ENCODE measurements at regions of chr6 and their contacts with region 1.

Region 1: DNA sequence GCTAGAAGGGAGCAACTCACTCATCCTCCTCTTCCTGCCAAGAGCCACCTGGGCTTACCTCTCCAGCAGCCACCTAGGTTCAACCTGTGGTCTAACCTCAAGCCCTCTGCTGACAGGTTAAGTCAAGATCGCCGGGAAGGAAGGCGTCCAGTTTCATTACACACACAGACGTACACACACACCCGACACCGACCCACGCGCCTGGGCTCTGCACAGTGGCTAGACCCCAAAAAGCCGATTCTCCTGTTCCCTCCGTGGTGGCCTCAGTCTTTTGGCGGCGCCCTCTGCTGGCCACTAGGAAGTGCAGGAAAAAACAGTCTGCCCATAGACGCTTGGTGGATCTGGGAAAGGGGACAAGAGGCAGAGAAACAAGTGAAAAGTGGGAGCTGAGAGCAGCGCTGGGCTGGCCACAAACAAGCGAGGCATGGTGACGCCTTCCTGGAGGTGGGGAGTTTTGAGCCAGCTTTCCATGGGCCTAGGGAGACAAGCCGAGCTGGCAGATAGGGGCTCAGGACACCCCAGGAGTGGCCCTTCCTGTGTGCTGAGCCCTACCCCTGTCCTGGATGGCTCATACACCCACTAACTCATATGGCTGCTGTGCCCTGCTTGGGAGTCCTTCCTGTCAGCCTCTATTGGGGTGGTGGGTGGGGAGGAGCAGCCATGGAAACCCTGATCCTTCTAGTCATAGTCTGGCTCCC is 52.7 kb downstream of the MRPL14 start:
- DNase-seq: peak; percentile 87
- ATAC-seq: peak; percentile 39
- H3K4me3 ChIP-seq: no peak overlapping the region
- H3K27ac ChIP-seq: peak overlapping the region; percentile 87
- H3K4me1 ChIP-seq: peaks cover 32% of the 10 kb centered on the region
- H3K27me3 ChIP-seq: no peaks in the 10 kb centered on the region
- CTCF ChIP-seq: peak; percentile 94
- POLR2A ChIP-seq: peak; percentile 48
- RAD21 ChIP-seq: peak; percentile 92

Region 2: GRCh38 chr6:43608310-43608763 is 466.3 kb before region 1 on chr6:
- CTCF ChIA-PET with region 1: interaction called, 8 read pairs
- POLR2A ChIA-PET with region 1: no interaction called
- dilution Hi-C with region 1: no loop called
- in situ Hi-C with region 1: loop called (anchors 10 kb)
- intact Hi-C with region 1: loop called (anchors 1 kb)
- DNase-seq: peak; percentile 86
- ATAC-seq: peak; percentile 81
- H3K4me3 ChIP-seq: no peak overlapping the region
- H3K27ac ChIP-seq: no peak overlapping the region
- H3K4me1 ChIP-seq: no peaks in the 10 kb centered on the region
- H3K27me3 ChIP-seq: no peaks in the 10 kb centered on the region
- CTCF ChIP-seq: peak; percentile 72
- POLR2A ChIP-seq: no peak
- RAD21 ChIP-seq: peak; percentile 68

Region 3: GRCh38 chr6:43723737-43724295 is 350.8 kb before region 1 on chr6:
- CTCF ChIA-PET with region 1: no interaction called
- POLR2A ChIA-PET with region 1: no interaction called
- dilution Hi-C with region 1: no loop called
- in situ Hi-C with region 1: no loop called
- intact Hi-C with region 1: loop called (anchors 1 kb)
- DNase-seq: peak; percentile 70
- ATAC-seq: peak; percentile 77
- H3K4me3 ChIP-seq: no peak overlapping the region
- H3K27ac ChIP-seq: no peak overlapping the region
- H3K4me1 ChIP-seq: peaks cover 20% of the 10 kb centered on the region
- H3K27me3 ChIP-seq: peaks cover 12% of the 10 kb centered on the region
- CTCF ChIP-seq: peak; percentile 70
- POLR2A ChIP-seq: no peak
- RAD21 ChIP-seq: peak; percentile 81

Region 4: GRCh38 chr6:43838276-43839036 is 236.1 kb before region 1 on chr6:
- CTCF ChIA-PET with region 1: no interaction called
- POLR2A ChIA-PET with region 1: no interaction called
- dilution Hi-C with region 1: no loop called
- in situ Hi-C with region 1: no loop called
- intact Hi-C with region 1: loop called (anchors 2 kb)
- DNase-seq: peak; percentile 81
- ATAC-seq: peak; percentile 77
- H3K4me3 ChIP-seq: no peak overlapping the region
- H3K27ac ChIP-seq: peak overlapping the region; percentile 39
- H3K4me1 ChIP-seq: peaks cover 37% of the 10 kb centered on the region
- H3K27me3 ChIP-seq: peaks cover 5% of the 10 kb centered on the region; the same call in 1 of the 2 replicates
- CTCF ChIP-seq: peak; percentile 55
- POLR2A ChIP-seq: no peak
- RAD21 ChIP-seq: peak; percentile 44

Region 5: GRCh38 chr6:43951063-43951755 is 123.4 kb before region 1 on chr6:
- CTCF ChIA-PET with region 1: no interaction called
- POLR2A ChIA-PET with region 1: no interaction called
- dilution Hi-C with region 1: no loop called
- in situ Hi-C with region 1: no loop called
- intact Hi-C with region 1: loop called (anchors 2 kb)
- DNase-seq: no peak
- ATAC-seq: peak; percentile 76
- H3K4me3 ChIP-seq: no peak overlapping the region
- H3K27ac ChIP-seq: no peak overlapping the region
- H3K4me1 ChIP-seq: peaks cover 13% of the 10 kb centered on the region
- H3K27me3 ChIP-seq: no peaks in the 10 kb centered on the region
- CTCF ChIP-seq: peak; percentile 47
- POLR2A ChIP-seq: no peak
- RAD21 ChIP-seq: peak; percentile 56

Region 6: GRCh38 chr6:44010411-44011349 is 63.9 kb before region 1 on chr6:
- CTCF ChIA-PET with region 1: interaction called, 4 read pairs
- POLR2A ChIA-PET with region 1: no interaction called
- dilution Hi-C with region 1: no loop called
- in situ Hi-C with region 1: no loop called
- intact Hi-C with region 1: loop called (anchors 2 kb)
- DNase-seq: peak; percentile 100
- ATAC-seq: peak; percentile 86
- H3K4me3 ChIP-seq: no peak overlapping the region
- H3K27ac ChIP-seq: peak overlapping the region; percentile 81
- H3K4me1 ChIP-seq: peaks cover 24% of the 10 kb centered on the region
- H3K27me3 ChIP-seq: no peaks in the 10 kb centered on the region
- CTCF ChIP-seq: no peak
- POLR2A ChIP-seq: peak; percentile 81; the same call in 1 of the 2 replicates
- RAD21 ChIP-seq: peak; percentile 36

Measured in IMR-90 (cell line).